Activated CD4-positive, alpha-beta memory T cell treated with anti-CD3 and anti-CD28 coated beads for 36 hours (primary cell): ENCODE measurements at regions of chr19 and their contacts with region 1.

Region 1: DNA sequence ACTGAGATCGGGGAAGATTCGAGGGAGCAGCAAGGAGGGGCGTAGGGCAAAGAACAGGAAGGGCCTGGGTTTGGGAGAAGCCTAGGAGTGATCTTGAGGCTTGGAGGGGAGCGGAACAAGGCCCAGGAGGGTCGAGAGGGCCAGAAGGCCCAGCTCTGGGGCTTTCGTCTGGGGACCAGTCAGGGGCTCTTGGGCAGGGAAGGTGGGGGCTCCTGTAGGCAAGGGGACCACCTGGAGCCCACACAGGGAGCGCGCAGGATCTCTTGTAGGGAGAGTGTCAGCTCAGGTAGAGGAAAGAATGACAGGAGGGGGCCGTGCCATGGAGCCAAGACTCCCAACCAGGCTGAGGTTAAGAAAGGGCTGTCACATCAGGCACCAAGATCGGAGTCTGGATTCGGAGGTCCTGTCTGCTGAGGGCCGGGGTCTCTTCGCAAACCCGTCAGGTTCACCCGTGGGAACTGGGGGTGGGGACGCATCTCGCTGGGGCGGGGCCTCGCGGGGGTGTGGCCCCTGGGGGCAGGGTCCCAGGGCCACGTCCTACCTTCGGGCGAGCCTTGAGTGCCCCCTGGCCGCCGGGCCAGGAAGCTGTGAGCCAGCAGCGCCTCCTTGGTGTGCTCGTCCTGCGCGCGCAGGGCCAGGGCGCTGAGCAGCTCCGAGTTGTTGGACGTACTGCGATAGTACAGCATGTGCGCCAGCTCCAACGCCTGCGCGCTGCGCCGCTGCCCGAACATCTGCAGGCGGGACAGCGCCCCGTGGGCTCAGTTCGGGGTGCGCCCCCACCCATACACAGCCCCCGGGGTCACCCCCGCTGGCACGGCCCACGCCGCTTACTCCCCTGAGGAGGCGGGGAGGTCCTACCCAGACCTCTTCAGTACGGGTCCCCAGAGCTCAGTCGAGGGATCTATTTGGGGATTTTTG is 8.4 kb downstream of the EMP3 start:
- DNase-seq: peak; percentile 95
- H3K4me3 Mint-ChIP-seq: peak overlapping the region; percentile 92
- H3K27ac Mint-ChIP-seq: peak overlapping the region; percentile 97
- H3K4me1 Mint-ChIP-seq: peaks cover 46% of the 10 kb centered on the region
- H3K27me3 Mint-ChIP-seq: no peaks in the 10 kb centered on the region

Region 2: DNA sequence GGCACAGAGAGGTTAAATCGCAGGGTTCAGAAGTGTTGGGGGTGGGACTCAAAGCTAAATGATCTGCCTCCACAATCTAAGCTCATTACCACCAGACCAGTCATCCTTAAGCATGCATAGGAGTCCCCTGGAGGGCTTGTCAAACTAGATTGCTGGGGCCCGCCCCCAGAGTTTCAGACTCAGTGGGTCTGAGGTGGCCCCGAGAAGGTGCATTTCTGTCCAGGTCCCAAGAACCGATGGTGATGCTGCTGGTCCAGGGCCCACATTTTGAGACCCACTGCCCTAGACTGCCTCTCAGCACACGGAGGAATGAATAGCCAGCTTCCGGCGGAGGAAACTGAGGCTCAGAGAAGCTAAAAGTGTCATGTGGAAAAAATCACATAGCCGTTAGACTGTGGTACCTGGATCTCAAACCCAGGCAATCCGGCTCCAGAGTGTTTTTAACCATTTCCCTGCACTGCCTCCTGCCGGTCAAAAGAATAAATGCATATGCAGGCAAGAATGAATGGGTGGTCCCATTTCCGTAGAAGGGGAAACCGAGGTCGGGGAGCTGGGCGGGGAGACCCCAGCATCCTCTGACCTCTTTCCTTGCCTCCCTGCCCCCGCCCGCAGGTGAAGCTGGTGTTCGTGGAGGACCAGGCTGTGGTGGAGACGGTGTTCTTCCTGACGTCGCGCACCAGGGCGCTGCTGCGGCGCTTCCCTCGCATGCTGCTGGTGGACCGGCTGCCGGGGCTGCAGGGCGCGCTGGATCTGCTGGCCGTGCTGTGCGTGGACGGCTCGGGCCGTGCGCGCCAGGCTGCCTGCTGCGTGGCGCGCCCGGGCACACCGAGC is 139.5 kb before region 1 on chr19:
- CTCF ChIA-PET with region 1: no interaction called
- POLR2A ChIA-PET with region 1: no interaction called
- intact Hi-C with region 1: no loop called
- DNase-seq: peak; percentile 38
- H3K4me3 Mint-ChIP-seq: no peak overlapping the region
- H3K27ac Mint-ChIP-seq: no peak overlapping the region
- H3K4me1 Mint-ChIP-seq: peaks cover 2% of the 10 kb centered on the region
- H3K27me3 Mint-ChIP-seq: peaks cover 3% of the 10 kb centered on the region

Region 3: DNA sequence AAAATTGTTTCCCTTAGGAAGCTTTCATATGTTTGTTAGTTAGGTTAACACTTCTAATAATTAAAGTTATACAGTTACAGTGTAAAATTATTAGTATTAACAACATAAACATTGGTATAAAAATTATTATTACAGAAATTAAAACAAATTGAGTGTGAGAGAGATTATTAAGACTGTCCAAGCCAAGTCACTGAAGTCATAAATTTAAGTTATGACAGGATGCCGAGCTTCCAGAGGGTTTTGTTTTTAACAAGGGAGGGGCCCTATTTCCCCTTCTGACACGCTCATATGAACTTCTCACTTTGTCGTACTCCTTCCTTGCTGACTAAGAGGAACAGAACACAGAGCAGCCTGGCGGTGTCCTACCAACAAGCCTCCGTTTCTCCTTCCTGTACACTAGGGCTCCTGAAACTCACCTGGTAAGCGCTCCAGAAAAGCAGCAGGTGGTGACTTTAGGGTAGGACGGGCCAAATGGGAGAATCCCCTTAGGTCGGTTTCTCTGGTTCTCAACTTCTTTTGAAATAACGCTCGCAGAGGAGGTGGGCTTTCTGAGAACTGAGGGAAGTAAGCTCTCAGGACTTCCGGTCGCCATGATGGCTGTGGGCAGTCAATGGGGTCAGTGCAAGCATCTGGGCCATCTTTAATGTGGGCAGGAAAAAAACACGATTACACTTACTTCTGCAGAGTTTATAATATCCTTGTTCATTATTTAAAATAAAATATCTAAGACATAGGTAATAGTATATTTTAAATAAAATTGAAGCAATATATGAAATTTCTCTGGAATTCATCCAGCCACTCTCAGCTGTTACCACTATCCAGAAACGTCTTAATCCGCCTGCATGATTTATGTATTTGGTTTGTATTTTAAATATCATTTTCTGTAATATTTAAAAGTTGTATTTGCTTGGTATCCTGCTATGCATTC is 78.1 kb before region 1 on chr19 and contains the start of gene CARD8:
- CTCF ChIA-PET with region 1: interaction called, 3 read pairs
- POLR2A ChIA-PET with region 1: no interaction called
- intact Hi-C with region 1: loop called (anchors 5 kb)
- DNase-seq: peak; percentile 86
- H3K4me3 Mint-ChIP-seq: peak within 1 kb of the TSS; percentile 91
- H3K27ac Mint-ChIP-seq: peak within 1 kb of the TSS; percentile 98
- H3K4me1 Mint-ChIP-seq: peaks cover 62% of the 10 kb centered on the region
- H3K27me3 Mint-ChIP-seq: no peaks in the 10 kb centered on the region
- total RNA-seq, gene CARD8: 152 TPM

Region 4: GRCh38 chr19:48351341-48351752 is 17.6 kb after region 1 on chr19:
- CTCF ChIA-PET with region 1: interaction called, 19 read pairs
- POLR2A ChIA-PET with region 1: no interaction called
- intact Hi-C with region 1: no loop called
- DNase-seq: peak; percentile 89
- H3K4me3 Mint-ChIP-seq: no peak overlapping the region
- H3K27ac Mint-ChIP-seq: no peak overlapping the region
- H3K4me1 Mint-ChIP-seq: peaks cover 4% of the 10 kb centered on the region
- H3K27me3 Mint-ChIP-seq: no peaks in the 10 kb centered on the region

Region 5: DNA sequence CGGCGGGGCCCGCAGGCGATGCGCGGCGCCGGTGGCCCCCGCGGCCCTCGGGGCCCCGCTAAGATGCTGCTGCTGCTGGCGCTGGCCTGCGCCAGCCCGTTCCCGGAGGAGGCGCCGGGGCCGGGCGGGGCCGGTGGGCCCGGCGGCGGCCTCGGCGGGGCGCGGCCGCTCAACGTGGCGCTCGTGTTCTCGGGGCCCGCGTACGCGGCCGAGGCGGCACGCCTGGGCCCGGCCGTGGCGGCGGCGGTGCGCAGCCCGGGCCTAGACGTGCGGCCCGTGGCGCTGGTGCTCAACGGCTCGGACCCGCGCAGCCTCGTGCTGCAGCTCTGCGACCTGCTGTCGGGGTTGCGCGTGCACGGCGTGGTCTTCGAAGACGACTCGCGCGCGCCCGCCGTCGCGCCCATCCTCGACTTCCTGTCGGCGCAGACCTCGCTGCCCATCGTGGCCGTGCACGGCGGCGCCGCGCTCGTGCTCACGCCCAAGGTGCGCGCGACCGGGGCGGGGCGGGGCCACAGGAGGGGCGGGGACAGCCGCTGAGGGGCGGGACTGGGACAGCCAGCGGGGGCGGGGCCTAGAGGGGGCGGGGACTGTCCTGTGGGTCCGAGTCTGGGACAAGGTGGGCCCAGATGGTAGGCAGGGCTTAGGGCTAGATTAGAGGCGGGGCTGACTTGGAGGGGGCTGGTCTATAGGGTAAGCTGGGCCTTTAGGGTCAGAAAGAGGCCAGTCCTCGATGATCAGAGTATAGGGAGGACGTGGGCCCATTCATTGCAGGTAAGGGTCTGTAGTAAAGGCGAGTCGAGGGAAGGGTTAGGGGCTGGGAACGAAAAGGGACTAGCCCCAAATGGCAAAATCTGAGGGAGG is 64.9 kb after region 1 on chr19:
- CTCF ChIA-PET with region 1: interaction called, 4 read pairs
- POLR2A ChIA-PET with region 1: no interaction called
- intact Hi-C with region 1: loop called (anchors 5 kb)
- DNase-seq: peak; percentile 92
- H3K4me3 Mint-ChIP-seq: peak overlapping the region; percentile 76
- H3K27ac Mint-ChIP-seq: peak overlapping the region; percentile 29
- H3K4me1 Mint-ChIP-seq: peaks cover 32% of the 10 kb centered on the region
- H3K27me3 Mint-ChIP-seq: peaks cover 31% of the 10 kb centered on the region

Region 6: DNA sequence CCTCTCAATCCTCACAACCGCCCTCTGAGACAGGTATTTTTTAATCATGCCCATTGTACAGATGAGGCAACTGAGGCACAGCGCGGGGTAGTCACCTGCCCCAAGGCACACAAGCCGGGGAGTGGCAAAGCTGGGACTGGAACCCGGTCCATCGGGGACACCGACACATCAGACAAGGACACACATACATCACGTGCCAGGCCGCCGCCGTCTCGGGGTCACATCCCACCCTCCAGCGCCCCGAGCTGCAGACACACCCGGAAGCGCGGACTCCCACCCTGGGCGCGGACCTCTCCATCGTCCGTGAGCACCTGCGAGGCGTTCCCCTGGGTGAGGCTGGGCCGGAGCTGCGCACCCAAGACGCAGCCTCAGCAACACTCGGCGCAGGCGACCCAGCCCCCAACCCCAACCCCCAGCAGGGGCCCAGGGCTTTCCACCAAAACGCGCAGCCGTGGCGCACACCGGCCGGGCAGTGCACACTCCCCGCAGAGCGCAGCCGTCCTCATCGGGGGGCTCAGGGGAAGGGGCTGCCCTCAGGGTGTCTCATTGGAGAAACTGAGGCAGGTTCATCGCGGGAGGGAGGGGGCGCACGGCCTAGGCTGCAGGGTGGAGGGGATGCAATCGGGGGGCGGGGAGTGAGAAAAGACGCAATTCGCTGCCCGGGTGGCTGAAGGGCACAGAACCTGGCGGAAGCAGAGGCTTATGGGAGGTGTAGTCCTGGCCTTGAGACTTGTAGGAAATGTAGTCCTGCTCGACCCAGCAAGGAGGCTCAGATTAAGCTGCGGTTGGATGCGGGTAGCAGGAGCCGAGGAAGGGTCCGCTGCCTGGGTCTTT is 179.8 kb after region 1 on chr19:
- CTCF ChIA-PET with region 1: no interaction called
- POLR2A ChIA-PET with region 1: no interaction called
- intact Hi-C with region 1: loop called (anchors 5 kb)
- DNase-seq: peak; percentile 85
- H3K4me3 Mint-ChIP-seq: no peak overlapping the region
- H3K27ac Mint-ChIP-seq: peak overlapping the region; percentile 58
- H3K4me1 Mint-ChIP-seq: peaks cover 14% of the 10 kb centered on the region
- H3K27me3 Mint-ChIP-seq: no peaks in the 10 kb centered on the region